BJ (cell line): ENCODE measurements at regions of chr1 and their contacts with region 1.

Region 1: DNA sequence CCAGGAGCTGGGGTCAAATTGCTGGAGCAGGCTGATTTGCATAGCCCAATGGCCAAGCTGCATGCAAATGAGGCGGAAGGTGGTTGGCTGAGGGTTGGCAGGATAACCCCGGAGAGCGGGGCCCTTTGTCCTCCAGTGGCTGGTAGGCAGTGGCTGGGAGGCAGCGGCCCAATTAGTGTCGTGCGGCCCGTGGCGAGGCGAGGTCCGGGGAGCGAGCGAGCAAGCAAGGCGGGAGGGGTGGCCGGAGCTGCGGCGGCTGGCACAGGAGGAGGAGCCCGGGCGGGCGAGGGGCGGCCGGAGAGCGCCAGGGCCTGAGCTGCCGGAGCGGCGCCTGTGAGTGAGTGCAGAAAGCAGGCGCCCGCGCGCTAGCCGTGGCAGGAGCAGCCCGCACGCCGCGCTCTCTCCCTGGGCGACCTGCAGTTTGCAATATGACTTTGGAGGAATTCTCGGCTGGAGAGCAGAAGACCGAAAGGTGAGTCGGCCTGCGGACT is at the start of gene GADD45A:
- DNase-seq: peak; percentile 97
- H3K4me3 ChIP-seq: peak within 1 kb of the TSS; percentile 85
- H3K27me3 ChIP-seq: no peaks in the 10 kb centered on the region
- CTCF ChIP-seq: no peak
- polyA plus RNA-seq, gene GADD45A: 27.4 and 32.1 TPM in 2 replicates

Region 2: GRCh38 chr1:67674260-67675011 is 10.7 kb before region 1 on chr1:
- CTCF ChIA-PET with region 1: interaction called, 6 read pairs
- POLR2A ChIA-PET with region 1: interaction called, 10 read pairs
- DNase-seq: no peak
- H3K4me3 ChIP-seq: no peak overlapping the region
- H3K27me3 ChIP-seq: no peaks in the 10 kb centered on the region
- CTCF ChIP-seq: no peak

Region 3: GRCh38 chr1:67695963-67696362 is 10.9 kb after region 1 on chr1:
- CTCF ChIA-PET with region 1: no interaction called
- POLR2A ChIA-PET with region 1: no interaction called
- DNase-seq: no peak
- H3K4me3 ChIP-seq: no peak overlapping the region
- H3K27me3 ChIP-seq: no peaks in the 10 kb centered on the region
- CTCF ChIP-seq: no peak

Region 4: DNA sequence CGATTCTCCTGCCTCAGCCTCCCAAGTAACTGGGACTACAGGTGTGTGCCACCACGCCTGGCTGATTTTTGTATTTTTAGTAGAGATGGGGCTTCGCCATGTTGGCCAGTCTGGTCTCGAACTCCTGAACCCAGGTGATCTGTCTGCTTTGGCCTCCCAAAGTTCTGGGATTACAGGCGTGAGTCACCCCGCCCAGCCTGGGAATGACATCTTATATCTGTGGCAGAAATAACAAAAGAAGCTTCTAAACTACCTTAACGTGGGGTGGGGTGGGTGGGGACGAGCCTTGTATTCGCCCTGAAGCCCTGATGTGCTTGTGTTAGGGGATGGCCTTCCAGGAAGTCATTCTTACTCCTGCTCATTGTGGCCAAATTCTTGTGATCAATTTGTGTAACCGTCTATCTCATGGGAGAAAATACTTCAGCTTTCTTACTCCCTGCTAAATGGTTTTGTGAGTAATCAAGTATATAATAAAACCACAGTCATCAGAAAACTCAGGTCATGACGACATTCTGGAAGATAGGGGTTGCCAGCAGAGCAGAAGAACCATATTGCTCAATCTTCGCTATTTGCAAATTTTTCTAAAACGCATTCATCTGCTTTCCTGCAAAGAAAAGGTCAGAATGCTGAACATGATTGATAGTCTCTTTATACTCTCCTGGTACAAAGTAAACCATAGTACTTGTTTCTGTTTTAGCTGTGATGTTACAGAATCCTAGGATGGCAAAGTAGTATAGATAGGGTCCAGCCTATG is 302.1 kb after region 1 on chr1:
- CTCF ChIA-PET with region 1: no interaction called
- POLR2A ChIA-PET with region 1: no interaction called
- DNase-seq: peak; percentile 77
- H3K4me3 ChIP-seq: no peak overlapping the region
- H3K27me3 ChIP-seq: no peaks in the 10 kb centered on the region
- CTCF ChIP-seq: no peak